A673 (cell line): ENCODE measurements at regions of chr11 and their contacts with region 1.

Region 1: DNA sequence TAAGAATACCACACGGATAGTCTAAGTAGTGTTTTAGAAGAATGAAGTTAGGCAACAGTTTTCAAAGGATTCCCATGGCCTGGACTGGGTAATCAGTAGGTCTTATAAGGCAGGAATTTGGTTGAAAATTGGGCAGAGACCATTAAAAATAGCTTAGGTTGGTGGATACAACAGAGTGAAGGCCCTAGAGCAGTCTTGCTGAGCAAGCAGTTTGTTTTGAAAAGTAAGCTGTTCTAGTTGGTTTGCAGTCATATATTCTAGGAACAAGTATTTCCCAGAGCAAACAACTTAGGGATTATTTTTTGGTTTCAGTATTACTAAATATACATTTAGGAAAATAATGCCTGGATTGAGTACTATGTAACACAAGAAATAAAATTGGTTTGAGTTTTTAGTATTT is 64.8 kb downstream of the MUC15 start:
- DNase-seq: no peak
- H3K4me3 ChIP-seq: no peak overlapping the region
- H3K27ac ChIP-seq: no peak overlapping the region
- H3K4me1 ChIP-seq: no peaks in the 10 kb centered on the region
- H3K27me3 ChIP-seq: peaks cover 15% of the 10 kb centered on the region
- CTCF ChIP-seq: no peak

Region 2: GRCh38 chr11:26276798-26277424 is 230.3 kb before region 1 on chr11:
- CTCF ChIA-PET with region 1: no interaction called
- POLR2A ChIA-PET with region 1: no interaction called
- intact Hi-C with region 1: no loop called
- DNase-seq: peak; percentile 60
- H3K4me3 ChIP-seq: no peak overlapping the region
- H3K27ac ChIP-seq: no peak overlapping the region
- H3K4me1 ChIP-seq: no peaks in the 10 kb centered on the region
- H3K27me3 ChIP-seq: no peaks in the 10 kb centered on the region
- CTCF ChIP-seq: peak; percentile 87

Region 3: GRCh38 chr11:26537341-26537740 is 30.1 kb after region 1 on chr11:
- CTCF ChIA-PET with region 1: no interaction called
- POLR2A ChIA-PET with region 1: interaction called, 10 read pairs
- intact Hi-C with region 1: no loop called
- DNase-seq: peak; percentile 11
- H3K4me3 ChIP-seq: no peak overlapping the region
- H3K27ac ChIP-seq: no peak overlapping the region
- H3K4me1 ChIP-seq: no peaks in the 10 kb centered on the region
- H3K27me3 ChIP-seq: peaks cover 19% of the 10 kb centered on the region
- CTCF ChIP-seq: no peak

Region 4: DNA sequence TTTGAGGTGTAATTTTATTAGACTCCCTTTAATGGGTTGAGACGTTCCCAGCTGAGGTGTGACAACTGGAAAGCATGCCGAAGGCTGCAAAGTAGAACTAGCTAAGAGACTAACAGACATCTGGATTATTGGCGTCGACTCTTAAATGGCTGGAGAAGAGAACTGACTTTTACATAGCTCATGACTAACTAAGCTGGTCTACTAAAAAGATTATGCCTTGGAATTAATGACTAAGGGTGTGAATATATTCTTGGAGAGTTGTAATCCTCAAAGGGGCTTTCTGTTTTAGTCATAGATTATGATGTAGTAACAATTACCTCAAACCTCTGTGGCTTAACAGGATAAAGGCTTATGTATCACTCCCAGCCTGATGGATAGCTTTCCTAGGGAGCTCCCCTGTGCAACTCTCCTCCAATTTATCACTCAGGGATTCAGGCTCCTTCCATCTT is 254.2 kb after region 1 on chr11:
- CTCF ChIA-PET with region 1: no interaction called
- POLR2A ChIA-PET with region 1: no interaction called
- intact Hi-C with region 1: no loop called
- DNase-seq: no peak
- H3K4me3 ChIP-seq: no peak overlapping the region
- H3K27ac ChIP-seq: no peak overlapping the region
- H3K4me1 ChIP-seq: no peaks in the 10 kb centered on the region
- H3K27me3 ChIP-seq: peaks cover 53% of the 10 kb centered on the region
- CTCF ChIP-seq: no peak